ENCODE measurements at regions of chr2 and their contacts with region 1.

Region 1: DNA sequence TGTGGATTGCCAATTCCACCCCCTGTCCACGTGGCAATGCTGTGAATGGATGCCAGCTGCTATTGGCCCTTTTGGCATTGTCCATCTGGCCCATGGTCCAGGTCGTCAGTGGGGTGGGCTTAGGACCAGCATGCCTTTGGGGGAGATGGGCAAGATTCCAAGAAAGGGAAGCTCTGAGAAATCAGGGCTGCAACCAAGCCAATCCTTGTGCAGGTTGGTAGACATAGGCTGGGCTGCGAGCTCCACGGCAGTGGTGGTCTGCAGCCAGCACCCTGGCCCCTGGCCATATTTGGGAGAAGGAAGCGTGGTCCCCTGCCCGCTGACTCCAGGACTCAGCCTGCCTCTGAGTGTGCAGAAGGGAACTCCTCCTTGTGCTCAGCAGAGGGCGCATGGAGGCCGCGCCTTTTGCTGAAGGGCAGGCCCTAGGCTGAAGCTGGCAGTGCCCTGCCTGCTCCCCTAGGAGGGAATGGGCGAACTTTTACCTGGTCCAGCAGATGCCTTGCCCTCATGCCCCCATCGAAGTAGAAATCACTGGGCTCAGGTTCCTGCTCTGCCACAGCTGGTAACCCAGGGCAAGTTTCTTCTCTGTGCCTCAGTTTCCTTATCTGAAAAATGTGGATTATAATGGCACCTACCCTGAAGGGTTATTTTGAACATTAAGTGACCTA is 5.4 kb downstream of the SPR start:
- DNase-seq: peak; percentile 51
- H3K4me3 ChIP-seq: no peak overlapping the region
- H3K27ac ChIP-seq: no peak overlapping the region
- H3K4me1 ChIP-seq: no peaks in the 10 kb centered on the region
- H3K27me3 ChIP-seq: no peaks in the 10 kb centered on the region
- CTCF ChIP-seq: peak; percentile 20 to 75 (median 58)
- POLR2A ChIP-seq: no peak

Region 2: DNA sequence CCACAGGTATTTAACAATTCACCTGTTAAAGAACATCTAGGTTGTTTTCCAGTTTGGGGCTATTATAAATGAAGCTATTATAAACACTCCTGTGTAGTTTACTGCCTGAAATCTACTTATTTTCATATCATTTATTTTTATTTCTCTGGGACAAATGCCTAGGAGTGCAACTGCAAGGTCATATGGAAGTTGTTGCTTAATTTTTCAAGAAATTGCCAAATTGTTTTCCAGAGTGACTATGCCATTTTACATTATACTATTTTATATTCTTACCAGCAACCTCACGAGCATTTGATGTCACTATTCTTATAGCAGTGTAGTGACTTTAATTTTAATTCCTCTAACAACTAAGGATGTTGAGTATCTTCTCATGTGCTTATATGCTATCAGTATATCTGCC is 365.2 kb before region 1 on chr2:
- intact Hi-C with region 1: no loop called
- DNase-seq: no peak
- H3K4me3 ChIP-seq: no peak overlapping the region
- H3K27ac ChIP-seq: no peak overlapping the region
- H3K4me1 ChIP-seq: no peaks in the 10 kb centered on the region
- H3K27me3 ChIP-seq: no peaks in the 10 kb centered on the region
- CTCF ChIP-seq: no peak
- POLR2A ChIP-seq: no peak

Region 3: DNA sequence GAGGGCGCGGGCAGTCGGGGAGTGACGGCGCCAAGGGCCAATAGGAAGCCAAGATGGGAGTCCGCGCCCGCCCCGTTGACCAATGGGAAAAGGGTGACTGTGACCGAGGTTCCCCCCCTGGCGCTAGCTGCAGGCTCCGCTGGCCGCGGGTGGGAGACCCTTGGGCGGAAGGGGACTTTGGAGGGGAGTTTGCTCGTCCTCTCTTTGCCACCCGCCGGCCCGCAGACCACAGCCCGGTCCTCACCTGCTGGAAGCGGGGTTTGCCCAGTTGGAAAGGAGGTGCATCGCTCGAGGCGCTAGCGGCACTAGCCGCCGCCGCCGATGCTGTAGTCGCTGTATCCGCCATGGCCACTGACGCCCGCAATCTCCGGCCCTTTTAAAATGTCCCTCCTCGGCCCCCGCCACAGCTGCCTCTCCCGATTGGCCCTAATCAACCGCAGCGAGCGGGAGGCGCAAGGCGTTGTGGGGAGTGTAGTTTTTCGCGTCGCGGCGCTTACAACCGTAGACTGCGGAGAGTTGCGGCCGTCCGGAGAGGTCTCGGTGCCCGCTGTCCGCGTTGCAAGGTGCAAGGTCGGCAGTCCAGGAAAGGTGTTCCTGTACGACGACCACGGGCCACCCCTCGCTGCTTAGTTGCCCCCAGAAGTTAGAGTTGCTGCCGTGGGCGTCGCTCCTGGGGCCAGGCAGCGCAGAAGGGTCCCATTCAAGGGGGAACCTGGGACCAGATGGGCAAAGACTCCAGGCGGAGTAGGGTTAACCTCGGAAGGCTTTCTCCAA is 178.9 kb after region 1 on chr2 and contains the start of gene SFXN5:
- intact Hi-C with region 1: loop called (anchors 10 kb)
- DNase-seq: peak; percentile 98
- H3K4me3 ChIP-seq: peak within 1 kb of the TSS; percentile 80 to 82
- H3K27ac ChIP-seq: peak within 1 kb of the TSS; percentile 76 to 87
- H3K4me1 ChIP-seq: peaks cover 2% of the 10 kb centered on the region
- H3K27me3 ChIP-seq: no peaks in the 10 kb centered on the region
- CTCF ChIP-seq: peak in 3 of 4 experiments; percentile 20 to 49 (median 34)
- POLR2A ChIP-seq: no peak
- total RNA-seq, gene SFXN5: 12.8 to 23.2 TPM

Region 4: DNA sequence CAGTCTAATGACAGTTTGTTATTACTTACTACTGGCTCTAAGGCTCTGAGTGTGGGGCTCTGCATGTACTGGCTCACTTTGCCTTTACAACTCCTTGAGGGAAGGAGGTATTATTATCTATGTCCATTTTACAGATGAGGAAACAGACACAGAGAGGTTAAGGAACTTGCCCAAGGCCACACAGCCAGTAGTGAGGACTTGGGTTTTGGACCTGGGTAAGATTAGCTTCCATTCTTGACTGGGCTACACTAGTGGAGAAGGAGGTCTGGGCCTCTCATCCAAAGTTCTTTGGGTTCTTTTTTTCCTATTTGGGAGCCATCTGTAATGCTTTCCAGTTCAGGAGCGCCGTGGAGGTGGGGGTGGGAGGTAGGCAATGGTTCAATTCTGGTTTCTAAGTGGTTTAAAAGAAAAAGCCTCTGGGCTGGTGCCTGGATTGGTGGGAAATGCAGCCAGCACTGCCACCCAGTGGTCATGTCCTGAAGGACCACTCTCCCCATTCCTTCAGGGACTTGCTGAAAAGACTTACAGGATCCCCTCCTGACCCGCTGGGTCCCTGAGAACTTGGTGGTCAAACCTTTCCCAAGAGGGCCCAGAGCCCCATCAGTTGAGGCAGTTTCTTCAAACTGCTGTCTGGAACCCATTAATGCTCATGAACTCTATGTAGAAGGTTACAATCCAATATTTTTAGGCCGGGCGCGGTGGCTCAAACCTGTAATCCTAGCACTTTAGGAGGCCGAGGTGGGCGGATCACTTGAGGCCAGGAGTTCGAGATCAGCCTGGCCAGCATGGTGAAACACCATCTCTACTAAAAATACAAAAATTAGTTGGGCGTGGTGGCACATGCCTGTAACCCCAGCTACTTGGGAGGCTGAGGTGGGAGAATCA is 271.1 kb after region 1 on chr2:
- intact Hi-C with region 1: loop called (anchors 5 kb)
- DNase-seq: peak; percentile 30
- H3K4me3 ChIP-seq: no peak overlapping the region
- H3K27ac ChIP-seq: no peak overlapping the region
- H3K4me1 ChIP-seq: no peaks in the 10 kb centered on the region
- H3K27me3 ChIP-seq: no peaks in the 10 kb centered on the region
- CTCF ChIP-seq: peak; percentile 31 to 82 (median 78)
- POLR2A ChIP-seq: no peak

Region 5: GRCh38 chr2:73176881-73177644 is 284.4 kb after region 1 on chr2:
- intact Hi-C with region 1: loop called (anchors 5 kb)
- DNase-seq: peak; percentile 86
- H3K4me3 ChIP-seq: peak overlapping the region; percentile 49 to 50
- H3K27ac ChIP-seq: peak overlapping the region; percentile 62 to 67
- H3K4me1 ChIP-seq: peaks cover 9% of the 10 kb centered on the region
- H3K27me3 ChIP-seq: no peaks in the 10 kb centered on the region
- CTCF ChIP-seq: peak; percentile 92 to 98 (median 98)
- POLR2A ChIP-seq: no peak